Activated T-helper 1 cell treated with anti-CD3 and anti-CD28 coated beads, Interleukin-12 subunit alpha, Interleukin-12 subunit beta, Interleukin-2, Interleukin-4 antibody, amounts not matched to agents 30 ng/mL and 10 ng/mL and 1 ng/mL, durations not matched to agents 14 hours and 24 hours and 36 hours (primary cell): ENCODE measurements at regions of chr19 and their contacts with region 1.

Region 1: DNA sequence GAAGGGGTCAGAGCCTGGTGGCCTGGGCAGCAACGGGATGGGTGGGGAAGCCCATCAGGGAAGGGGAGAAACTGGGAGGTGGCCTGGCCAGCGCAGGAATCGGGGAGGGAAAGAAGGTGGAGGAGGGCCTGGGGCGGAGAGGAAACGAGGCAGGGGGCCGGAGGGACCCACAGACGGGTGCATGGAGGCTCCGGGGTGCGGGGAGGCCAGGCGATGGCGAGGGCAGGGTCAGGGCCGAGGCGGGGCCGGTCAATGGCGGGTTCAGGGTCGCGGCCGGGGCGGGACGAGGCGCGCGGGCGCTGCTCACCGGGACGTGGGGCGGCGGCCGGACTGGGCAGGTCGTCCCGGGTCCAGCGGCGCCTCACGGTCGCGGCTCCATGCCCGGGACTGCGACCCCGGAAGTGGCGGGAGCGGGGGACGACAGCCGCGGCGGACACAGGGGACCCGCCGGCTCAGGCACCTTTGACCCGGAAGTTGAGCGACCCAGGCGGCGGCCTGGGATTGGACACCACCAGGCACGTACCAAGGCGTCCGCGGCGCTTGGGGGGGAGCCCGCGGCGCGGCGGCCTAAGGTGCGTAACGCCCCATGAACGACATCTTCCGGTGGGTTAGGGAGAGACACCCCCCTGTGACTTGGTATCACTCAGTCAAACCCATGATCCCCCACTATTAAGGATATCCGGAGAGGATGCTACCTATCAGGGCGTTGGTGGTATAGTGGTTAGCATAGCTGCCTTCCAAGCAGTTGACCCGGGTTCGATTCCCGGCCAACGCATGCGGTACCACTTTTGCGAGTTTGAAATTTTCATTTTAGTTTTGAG is at the start of gene DPP9:
- DNase-seq: peak; percentile 97
- H3K4me3 Mint-ChIP-seq: peak within 1 kb of the TSS; percentile 98
- H3K27ac Mint-ChIP-seq: peak within 1 kb of the TSS; percentile 91
- H3K4me1 Mint-ChIP-seq: peaks cover 25% of the 10 kb centered on the region
- H3K27me3 Mint-ChIP-seq: peaks cover 5% of the 10 kb centered on the region
- total RNA-seq, gene DPP9: 93.6 and 95.8 TPM in 2 replicates

Region 2: GRCh38 chr19:3035542-3036118 is 1687.9 kb before region 1 on chr19:
- intact Hi-C with region 1: loop called (anchors 5 kb)
- DNase-seq: peak; percentile 95
- H3K4me3 Mint-ChIP-seq: peak overlapping the region; percentile 94
- H3K27ac Mint-ChIP-seq: peak overlapping the region; percentile 98
- H3K4me1 Mint-ChIP-seq: peaks cover 18% of the 10 kb centered on the region
- H3K27me3 Mint-ChIP-seq: peaks cover 23% of the 10 kb centered on the region

Region 3: DNA sequence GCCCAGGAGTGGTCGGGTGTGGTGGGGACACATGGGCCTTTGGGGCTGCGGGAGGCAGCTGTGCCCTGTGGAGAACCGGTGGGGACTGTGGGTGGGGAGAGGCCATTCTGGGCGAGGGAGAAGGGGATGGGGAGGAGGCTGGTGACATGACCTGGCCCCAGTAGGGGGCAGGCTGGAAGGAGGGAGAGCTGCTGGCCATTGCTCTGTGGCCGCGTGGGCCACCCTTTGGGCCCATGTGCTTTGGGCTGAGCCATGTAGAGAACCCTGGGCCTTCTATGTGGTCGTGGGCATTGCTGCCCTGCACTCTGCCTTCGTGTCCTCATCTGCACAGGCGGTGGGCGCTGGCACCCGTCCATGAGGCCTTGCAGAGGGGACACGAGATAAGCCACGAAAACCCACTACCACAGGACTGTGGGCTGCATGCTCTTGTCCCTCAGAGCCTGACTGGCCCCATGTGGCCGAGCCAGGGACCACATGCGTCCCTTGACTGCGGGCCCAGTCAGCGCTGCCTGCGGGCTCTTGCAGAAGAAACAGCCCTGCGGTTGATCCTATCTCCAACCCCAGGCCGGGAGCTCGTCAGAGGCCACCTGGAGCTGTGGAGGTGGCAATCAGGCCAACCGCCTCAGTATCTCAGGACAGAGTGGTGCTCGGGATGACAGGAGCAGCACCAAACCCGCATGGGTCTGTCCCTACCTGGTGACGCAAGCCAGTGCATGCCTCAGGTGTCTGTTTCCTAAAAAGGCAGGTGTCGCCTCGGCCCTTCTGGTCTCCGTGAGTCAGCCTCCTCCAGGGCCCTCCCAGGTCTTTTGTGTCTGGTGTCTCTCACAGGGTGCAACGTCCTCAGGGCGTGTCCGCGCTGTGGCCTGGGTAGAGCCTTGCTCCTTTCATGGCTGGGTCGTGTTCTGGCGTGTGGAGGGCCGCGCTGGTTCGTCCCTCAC is 1203.1 kb before region 1 on chr19:
- intact Hi-C with region 1: no loop called
- DNase-seq: no peak
- H3K4me3 Mint-ChIP-seq: no peak overlapping the region
- H3K27ac Mint-ChIP-seq: no peak overlapping the region
- H3K4me1 Mint-ChIP-seq: peaks cover 9% of the 10 kb centered on the region
- H3K27me3 Mint-ChIP-seq: no peaks in the 10 kb centered on the region

Region 4: DNA sequence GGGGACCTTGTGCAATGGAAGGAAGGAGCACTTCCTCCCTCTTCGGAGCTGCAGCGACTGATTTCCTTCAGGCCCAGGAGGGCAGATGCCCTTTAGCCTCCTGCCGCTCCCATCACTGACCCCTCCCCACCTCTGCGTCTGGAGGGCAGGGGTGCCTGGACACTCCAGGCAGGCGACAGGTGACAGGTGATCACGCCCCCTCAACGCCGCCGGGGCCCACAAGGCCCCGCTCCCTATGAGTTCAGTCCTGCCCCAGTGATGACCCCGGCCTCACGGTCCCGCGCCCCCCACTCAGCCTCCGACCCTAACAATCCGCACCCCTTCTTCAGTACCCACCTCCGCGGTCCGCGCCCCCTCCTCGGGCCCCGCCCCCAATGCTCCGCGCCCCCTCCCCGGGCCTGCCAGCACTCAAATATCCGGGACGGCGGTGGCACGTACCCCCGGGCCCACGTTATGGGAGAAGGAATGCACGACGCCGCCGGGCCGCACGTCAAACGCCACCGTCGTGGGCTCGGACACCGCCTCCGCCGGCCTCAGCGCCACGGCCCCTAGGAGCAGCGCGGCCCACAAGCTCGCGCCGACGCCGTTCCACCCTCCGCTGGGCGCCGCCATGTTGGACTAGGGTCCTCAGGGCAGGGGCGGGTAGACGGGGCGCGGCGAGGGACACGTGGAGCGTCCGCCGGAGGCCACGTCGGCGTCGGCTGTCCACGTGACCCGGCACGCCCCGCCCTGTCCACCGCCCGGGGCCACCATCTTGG is 53.7 kb before region 1 on chr19 and contains the start of gene MYDGF:
- intact Hi-C with region 1: loop called (anchors 1 kb)
- DNase-seq: peak; percentile 91
- H3K4me3 Mint-ChIP-seq: peak within 1 kb of the TSS; percentile 91
- H3K27ac Mint-ChIP-seq: peak within 1 kb of the TSS; percentile 77
- H3K4me1 Mint-ChIP-seq: peaks cover 5% of the 10 kb centered on the region
- H3K27me3 Mint-ChIP-seq: no peaks in the 10 kb centered on the region
- total RNA-seq, gene MYDGF: 97.1 and 98.0 TPM in 2 replicates

Region 5: GRCh38 chr19:4791170-4792018 is 67.8 kb after region 1 on chr19 and contains the start of gene FEM1A:
- intact Hi-C with region 1: loop called (anchors 1 kb)
- DNase-seq: peak; percentile 98
- H3K4me3 Mint-ChIP-seq: peak within 1 kb of the TSS; percentile 89
- H3K27ac Mint-ChIP-seq: peak within 1 kb of the TSS; percentile 88
- H3K4me1 Mint-ChIP-seq: peaks cover 9% of the 10 kb centered on the region
- H3K27me3 Mint-ChIP-seq: no peaks in the 10 kb centered on the region
- total RNA-seq, gene FEM1A: 23.8 and 24.8 TPM in 2 replicates

Region 6: GRCh38 chr19:4968462-4969291 is 245.1 kb after region 1 on chr19 and contains the start of gene KDM4B:
- intact Hi-C with region 1: loop called (anchors 5 kb)
- DNase-seq: peak; percentile 100
- H3K4me3 Mint-ChIP-seq: peak within 1 kb of the TSS; percentile 94
- H3K27ac Mint-ChIP-seq: peak within 1 kb of the TSS; percentile 93
- H3K4me1 Mint-ChIP-seq: peaks cover 43% of the 10 kb centered on the region
- H3K27me3 Mint-ChIP-seq: no peaks in the 10 kb centered on the region
- total RNA-seq, gene KDM4B: 38.9 and 45.0 TPM in 2 replicates